ENCODE measurements at regions of chr19 and their contacts with region 1.

Region 1: GRCh38 chr19:14198384-14199376 is 7.3 kb downstream of the ADGRL1 start:
- DNase-seq: no peak
- H3K4me3 Mint-ChIP-seq: no peak overlapping the region
- H3K27ac Mint-ChIP-seq: no peak overlapping the region
- H3K4me1 Mint-ChIP-seq: peaks cover 22% of the 10 kb centered on the region
- H3K27me3 Mint-ChIP-seq: no peaks in the 10 kb centered on the region

Region 2: DNA sequence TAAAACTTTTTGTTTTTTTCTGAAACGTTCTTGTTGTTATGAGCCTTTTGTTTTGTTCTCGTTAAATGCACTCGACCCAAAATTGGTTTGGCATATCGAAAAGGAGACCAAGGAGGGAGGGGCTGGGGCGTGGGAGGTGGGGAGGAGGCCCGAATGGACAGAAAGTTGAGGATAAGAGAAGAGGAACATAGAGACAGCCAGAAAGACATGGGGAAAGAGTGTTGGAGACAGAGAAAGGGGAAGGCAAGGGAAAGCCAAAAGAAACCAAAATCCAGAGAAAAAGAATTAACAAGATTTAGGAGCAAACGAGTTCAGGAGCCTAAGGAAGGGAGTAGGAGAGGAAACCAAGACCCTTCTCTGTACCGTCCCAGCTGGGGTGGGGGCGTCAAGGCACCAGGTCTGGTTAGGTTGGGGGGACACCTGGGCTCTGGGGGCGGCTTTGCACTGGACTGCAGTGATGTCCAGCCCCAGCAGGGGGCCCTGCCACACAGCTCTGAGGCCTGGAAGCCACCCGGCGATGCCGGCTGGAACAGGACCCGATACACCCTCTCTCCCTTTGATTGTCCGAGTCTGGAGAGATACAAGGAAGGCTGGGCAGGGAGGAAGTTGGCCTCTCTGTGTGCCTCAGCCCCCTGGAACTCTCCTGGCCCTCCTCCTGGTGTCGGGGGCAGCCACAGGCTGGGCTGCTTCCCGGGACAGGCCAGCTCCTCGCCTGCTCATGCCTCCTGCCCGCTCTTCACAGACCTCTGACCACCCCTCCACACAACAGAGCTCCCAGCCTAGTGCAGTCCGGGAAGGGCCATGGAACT is 50.7 kb before region 1 on chr19:
- CTCF ChIA-PET with region 1: interaction called, 3 read pairs
- intact Hi-C with region 1: loop called (anchors 1 kb)
- DNase-seq: peak; percentile 69
- H3K4me3 Mint-ChIP-seq: peak overlapping the region; percentile 12
- H3K27ac Mint-ChIP-seq: peak overlapping the region; percentile 93
- H3K4me1 Mint-ChIP-seq: peaks cover 48% of the 10 kb centered on the region
- H3K27me3 Mint-ChIP-seq: no peaks in the 10 kb centered on the region

Region 3: DNA sequence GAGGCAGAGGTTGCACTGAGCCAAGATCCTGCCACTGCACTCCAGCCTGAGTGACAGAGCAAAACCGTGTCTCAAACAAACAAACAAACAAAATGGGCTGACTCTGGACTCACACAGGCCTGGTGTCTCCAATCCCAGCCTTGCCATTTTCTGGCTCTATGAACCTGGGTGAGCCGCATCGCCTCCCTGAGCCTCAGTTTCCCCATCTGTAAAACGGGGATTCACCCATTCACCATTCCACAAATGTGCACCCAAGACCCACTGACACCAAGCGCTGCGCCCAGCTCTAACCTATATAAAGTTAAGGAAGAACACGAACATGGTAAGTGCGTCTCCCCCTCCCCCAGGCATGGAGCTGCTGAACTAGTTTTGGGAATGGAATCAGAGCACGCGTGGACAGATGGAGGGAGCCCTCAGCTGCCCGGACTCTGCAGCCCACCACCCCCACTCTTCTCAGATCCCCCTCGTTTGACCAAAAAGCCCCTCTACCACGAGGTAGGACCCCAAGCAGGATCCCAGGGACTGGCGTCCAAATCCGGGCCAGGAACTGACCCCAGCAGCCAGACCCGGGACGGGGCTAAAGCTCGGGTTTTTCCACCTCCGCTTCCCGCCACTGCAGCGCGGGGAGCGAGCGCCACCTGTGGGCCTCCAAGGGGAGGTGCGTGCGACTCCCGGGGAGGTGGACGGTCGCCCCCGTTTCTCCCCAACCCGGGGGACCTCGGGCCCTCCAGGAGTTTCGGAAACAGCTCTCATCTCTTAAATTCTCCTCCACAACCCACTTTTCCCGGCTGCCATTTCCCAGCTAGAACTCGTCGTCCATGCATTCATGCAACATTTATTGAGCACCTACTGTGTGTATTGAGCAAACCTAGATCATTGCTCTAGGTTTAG is 149.6 kb after region 1 on chr19:
- CTCF ChIA-PET with region 1: interaction called, 56 read pairs
- intact Hi-C with region 1: loop called (anchors 1 kb)
- DNase-seq: peak; percentile 74
- H3K4me3 Mint-ChIP-seq: peak overlapping the region; percentile 43
- H3K27ac Mint-ChIP-seq: peak overlapping the region; percentile 79
- H3K4me1 Mint-ChIP-seq: peaks cover 20% of the 10 kb centered on the region
- H3K27me3 Mint-ChIP-seq: no peaks in the 10 kb centered on the region

Region 4: GRCh38 chr19:14479975-14480699 is 281.5 kb after region 1 on chr19:
- CTCF ChIA-PET with region 1: interaction called, 4 read pairs
- intact Hi-C with region 1: loop called (anchors 2 kb)
- DNase-seq: peak; percentile 74
- H3K4me3 Mint-ChIP-seq: no peak overlapping the region
- H3K27ac Mint-ChIP-seq: no peak overlapping the region
- H3K4me1 Mint-ChIP-seq: peaks cover 12% of the 10 kb centered on the region
- H3K27me3 Mint-ChIP-seq: peaks cover 3% of the 10 kb centered on the region

Region 5: GRCh38 chr19:14487370-14488125 is 288.9 kb after region 1 on chr19:
- CTCF ChIA-PET with region 1: interaction called, 4 read pairs
- intact Hi-C with region 1: loop called (anchors 2 kb)
- DNase-seq: no peak
- H3K4me3 Mint-ChIP-seq: no peak overlapping the region
- H3K27ac Mint-ChIP-seq: no peak overlapping the region
- H3K4me1 Mint-ChIP-seq: peaks cover 5% of the 10 kb centered on the region
- H3K27me3 Mint-ChIP-seq: no peaks in the 10 kb centered on the region